ENCODE measurements at regions of chr22 and their contacts with region 1.

Region 1: GRCh38 chr22:46977656-46978343 is 215.3 kb downstream of the TBC1D22A start:
- DNase-seq: peak in 1 of 2 donors; percentile 74
- H3K4me3 ChIP-seq: no peak overlapping the region
- CTCF ChIP-seq: no peak
- POLR2A ChIP-seq: no peak

Region 2: DNA sequence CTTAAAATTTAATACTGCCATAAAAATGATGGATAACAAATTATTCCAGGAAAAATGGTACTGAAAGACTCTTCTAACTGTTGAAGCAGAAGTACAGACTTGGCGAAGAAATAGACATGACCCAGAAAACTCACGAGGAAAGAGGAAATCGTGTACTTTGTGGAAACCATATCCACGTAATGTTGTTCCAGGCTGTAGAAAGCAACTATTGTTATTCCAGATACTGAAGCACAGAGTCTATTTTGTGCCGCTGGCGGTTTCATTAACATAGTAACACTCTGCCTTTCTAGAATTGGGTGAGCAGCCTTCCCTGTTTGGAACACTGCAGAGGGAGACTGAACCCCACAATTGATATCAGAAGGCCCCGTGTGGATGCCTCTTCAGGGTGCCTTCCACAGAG is 95.3 kb after region 1 on chr22:
- intact Hi-C with region 1: no loop called
- DNase-seq: no peak
- H3K4me3 ChIP-seq: no peak overlapping the region
- CTCF ChIP-seq: no peak
- POLR2A ChIP-seq: no peak

Region 3: DNA sequence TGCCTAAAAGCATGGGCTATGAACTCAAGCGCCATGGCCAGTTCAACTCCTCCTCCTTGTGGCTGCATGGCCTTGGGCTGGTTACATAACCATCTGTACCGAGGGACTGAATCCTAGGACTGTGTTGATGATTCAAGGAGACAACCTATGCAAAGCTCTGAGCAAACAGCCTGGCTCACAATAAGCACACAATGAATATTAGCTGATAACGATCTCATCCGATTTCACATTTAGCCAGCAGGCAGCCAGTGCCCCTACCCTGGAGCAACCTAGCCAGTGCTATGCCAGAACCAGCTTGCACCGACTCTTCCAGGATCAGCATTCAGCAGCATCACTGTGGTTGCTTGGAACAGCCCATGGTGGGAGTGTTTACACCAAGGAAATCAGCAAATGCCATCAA is 483.1 kb after region 1 on chr22:
- intact Hi-C with region 1: loop called (anchors 5 kb)
- DNase-seq: no peak
- H3K4me3 ChIP-seq: no peak overlapping the region
- CTCF ChIP-seq: no peak
- POLR2A ChIP-seq: no peak

Measured in lower leg skin (tissue), 4 donors.